Spleen (tissue), 13 donors: ENCODE measurements at regions of chr9 and their contacts with region 1.

Region 1: GRCh38 chr9:106324591-106325280 is 538.2 kb upstream of the ZNF462 start:
- DNase-seq: no peak
- H3K4me3 ChIP-seq: no peak overlapping the region
- H3K27ac ChIP-seq: no peak overlapping the region
- H3K4me1 ChIP-seq: no peaks in the 10 kb centered on the region
- H3K27me3 ChIP-seq: no peaks in the 10 kb centered on the region
- CTCF ChIP-seq: no peak
- POLR2A ChIP-seq: no peak

Region 2: GRCh38 chr9:106102821-106103220 is 221.9 kb before region 1 on chr9:
- intact Hi-C with region 1: no loop called
- DNase-seq: no peak
- H3K4me3 ChIP-seq: no peak overlapping the region
- H3K27ac ChIP-seq: no peak overlapping the region
- H3K4me1 ChIP-seq: no peaks in the 10 kb centered on the region
- H3K27me3 ChIP-seq: no peaks in the 10 kb centered on the region
- CTCF ChIP-seq: no peak
- POLR2A ChIP-seq: no peak

Region 3: DNA sequence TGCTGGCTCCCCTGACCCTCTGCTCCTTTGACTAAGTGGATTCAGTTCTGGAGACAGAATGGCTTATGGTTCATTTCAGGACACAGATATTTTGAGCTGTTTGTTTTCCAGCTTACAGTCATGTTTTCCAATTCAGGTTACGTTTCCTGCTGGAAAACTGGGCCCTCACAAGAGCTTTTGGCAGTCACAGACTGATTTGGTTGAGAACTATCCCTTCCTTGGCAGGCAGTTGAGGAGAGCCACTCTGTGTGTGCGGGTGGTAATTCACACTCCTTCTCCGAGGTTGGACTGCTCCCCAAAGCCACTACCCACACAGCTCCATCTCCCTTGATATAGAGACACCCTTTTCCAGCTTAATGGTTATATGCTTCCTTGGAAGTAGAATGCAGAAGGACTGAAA is 95.9 kb before region 1 on chr9:
- intact Hi-C with region 1: loop called (anchors 10 kb)
- DNase-seq: no peak
- H3K4me3 ChIP-seq: no peak overlapping the region
- H3K27ac ChIP-seq: no peak overlapping the region
- H3K4me1 ChIP-seq: no peaks in the 10 kb centered on the region
- H3K27me3 ChIP-seq: no peaks in the 10 kb centered on the region
- CTCF ChIP-seq: no peak
- POLR2A ChIP-seq: no peak

Region 4: GRCh38 chr9:106383072-106383471 is 58.3 kb after region 1 on chr9:
- intact Hi-C with region 1: no loop called
- DNase-seq: no peak
- H3K4me3 ChIP-seq: no peak overlapping the region
- H3K27ac ChIP-seq: no peak overlapping the region
- H3K4me1 ChIP-seq: no peaks in the 10 kb centered on the region
- H3K27me3 ChIP-seq: no peaks in the 10 kb centered on the region
- CTCF ChIP-seq: no peak
- POLR2A ChIP-seq: no peak